Psoas muscle (tissue), 8 donors: ENCODE measurements at regions of chr9 and their contacts with region 1.

Region 1: DNA sequence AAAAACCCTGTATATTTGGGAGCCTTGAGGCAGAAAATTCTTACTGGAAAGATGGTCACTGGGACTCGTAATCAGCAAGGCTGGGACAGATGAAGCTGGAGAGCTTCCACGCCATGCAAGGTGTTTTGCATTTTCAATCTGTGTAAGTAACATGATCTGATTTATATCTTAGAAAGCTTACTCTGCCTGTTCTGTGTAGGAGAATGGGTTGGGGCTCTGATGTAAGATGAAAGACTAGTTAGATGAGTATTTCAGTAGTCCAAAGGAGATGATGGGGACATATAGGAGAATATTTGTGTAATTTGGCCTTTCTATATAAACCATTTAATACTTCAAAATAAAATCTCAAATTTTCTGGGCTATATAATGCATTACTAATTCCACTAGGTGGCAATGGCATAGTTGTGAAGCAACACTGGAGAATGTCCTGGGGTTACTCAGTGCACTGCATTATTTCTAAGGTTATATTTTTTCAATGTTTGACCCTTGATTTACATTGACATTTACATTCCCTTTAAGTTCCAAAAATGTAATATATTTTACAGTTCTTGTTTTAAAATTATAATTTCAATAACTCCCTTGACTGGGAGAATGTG is 21.9 kb upstream of the FSD1L start:
- DNase-seq: no peak
- ATAC-seq: peak; percentile 64 to 92 (median 73)
- H3K4me3 ChIP-seq: no peak overlapping the region
- H3K27ac ChIP-seq: peak overlapping the region; percentile 25
- H3K4me1 ChIP-seq: no peaks in the 10 kb centered on the region
- H3K27me3 ChIP-seq: no peaks in the 10 kb centered on the region
- CTCF ChIP-seq: peak; percentile 55

Region 2: DNA sequence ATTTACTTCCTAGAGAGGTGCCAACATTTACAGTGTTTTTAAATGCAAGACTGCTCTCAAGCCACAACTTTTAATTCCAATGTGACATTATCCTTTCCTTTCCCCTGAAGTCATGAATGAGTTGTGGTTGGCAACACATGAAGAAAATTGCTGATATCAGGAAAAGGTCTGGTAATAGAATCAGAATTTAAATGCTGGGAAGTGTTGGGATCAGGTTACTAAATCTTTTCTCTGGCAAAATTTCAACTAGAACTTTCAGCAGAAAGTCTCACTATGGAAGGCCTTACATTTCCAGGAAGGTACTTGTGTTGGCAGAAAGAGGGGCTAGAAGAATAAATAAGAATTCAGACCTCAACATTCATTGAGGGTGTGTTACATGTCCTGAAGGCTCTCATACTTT is 192.1 kb before region 1 on chr9:
- intact Hi-C with region 1: no loop called
- DNase-seq: no peak
- ATAC-seq: no peak
- H3K4me3 ChIP-seq: no peak overlapping the region
- H3K27ac ChIP-seq: no peak overlapping the region
- H3K4me1 ChIP-seq: no peaks in the 10 kb centered on the region
- H3K27me3 ChIP-seq: no peaks in the 10 kb centered on the region
- CTCF ChIP-seq: no peak

Region 3: GRCh38 chr9:105328872-105329718 is 96.8 kb before region 1 on chr9:
- intact Hi-C with region 1: no loop called
- DNase-seq: peak; percentile 21 to 58
- ATAC-seq: peak; percentile 47 to 88 (median 56)
- H3K4me3 ChIP-seq: peak overlapping the region; percentile 51
- H3K27ac ChIP-seq: no peak overlapping the region
- H3K4me1 ChIP-seq: peaks cover 14% of the 10 kb centered on the region
- H3K27me3 ChIP-seq: no peaks in the 10 kb centered on the region
- CTCF ChIP-seq: no peak

Region 4: DNA sequence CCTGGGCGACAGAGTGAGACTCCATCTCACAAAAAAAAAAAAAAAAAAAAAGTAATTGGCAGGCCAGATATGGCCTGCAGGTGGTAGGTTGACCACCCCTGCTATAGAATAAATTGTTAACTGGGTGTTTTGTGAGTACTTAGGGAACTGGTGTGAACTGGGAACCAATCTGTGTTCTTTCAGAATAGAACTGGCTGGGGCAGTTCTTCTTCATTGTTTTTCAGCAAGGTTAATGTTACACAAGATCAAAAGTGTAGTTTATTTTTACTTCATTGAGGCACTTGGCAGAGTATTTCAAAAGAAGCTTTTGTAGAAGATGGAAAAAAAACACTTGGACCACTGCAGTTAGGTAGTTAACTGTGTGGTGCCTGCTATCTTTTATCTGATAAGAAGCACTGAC is 54.2 kb before region 1 on chr9:
- intact Hi-C with region 1: no loop called
- DNase-seq: no peak
- ATAC-seq: no peak
- H3K4me3 ChIP-seq: no peak overlapping the region
- H3K27ac ChIP-seq: no peak overlapping the region
- H3K4me1 ChIP-seq: no peaks in the 10 kb centered on the region
- H3K27me3 ChIP-seq: no peaks in the 10 kb centered on the region
- CTCF ChIP-seq: no peak

Region 5: GRCh38 chr9:105473221-105473620 is 47.3 kb after region 1 on chr9:
- intact Hi-C with region 1: loop called (anchors 5 kb)
- DNase-seq: no peak
- ATAC-seq: no peak
- H3K4me3 ChIP-seq: no peak overlapping the region
- H3K27ac ChIP-seq: no peak overlapping the region
- H3K4me1 ChIP-seq: peaks cover 11% of the 10 kb centered on the region
- H3K27me3 ChIP-seq: no peaks in the 10 kb centered on the region
- CTCF ChIP-seq: no peak